Activated T-helper 1 cell treated with anti-CD3 and anti-CD28 coated beads, Interleukin-12 subunit alpha, Interleukin-12 subunit beta, Interleukin-2, Interleukin-4 antibody, amounts not matched to agents 30 ng/mL and 10 ng/mL and 1 ng/mL, durations not matched to agents 14 hours and 24 hours and 36 hours (primary cell): ENCODE measurements at regions of chr4 and their contacts with region 1.

Region 1: GRCh38 chr4:77862478-77863216 is at the start of gene MRPL1:
- DNase-seq: peak; percentile 84
- H3K4me3 Mint-ChIP-seq: peak within 1 kb of the TSS; percentile 90
- H3K27ac Mint-ChIP-seq: peak within 1 kb of the TSS; percentile 94
- H3K4me1 Mint-ChIP-seq: peaks cover 48% of the 10 kb centered on the region
- H3K27me3 Mint-ChIP-seq: no peaks in the 10 kb centered on the region
- total RNA-seq, gene MRPL1: 72.7 and 75.0 TPM in 2 replicates

Region 2: DNA sequence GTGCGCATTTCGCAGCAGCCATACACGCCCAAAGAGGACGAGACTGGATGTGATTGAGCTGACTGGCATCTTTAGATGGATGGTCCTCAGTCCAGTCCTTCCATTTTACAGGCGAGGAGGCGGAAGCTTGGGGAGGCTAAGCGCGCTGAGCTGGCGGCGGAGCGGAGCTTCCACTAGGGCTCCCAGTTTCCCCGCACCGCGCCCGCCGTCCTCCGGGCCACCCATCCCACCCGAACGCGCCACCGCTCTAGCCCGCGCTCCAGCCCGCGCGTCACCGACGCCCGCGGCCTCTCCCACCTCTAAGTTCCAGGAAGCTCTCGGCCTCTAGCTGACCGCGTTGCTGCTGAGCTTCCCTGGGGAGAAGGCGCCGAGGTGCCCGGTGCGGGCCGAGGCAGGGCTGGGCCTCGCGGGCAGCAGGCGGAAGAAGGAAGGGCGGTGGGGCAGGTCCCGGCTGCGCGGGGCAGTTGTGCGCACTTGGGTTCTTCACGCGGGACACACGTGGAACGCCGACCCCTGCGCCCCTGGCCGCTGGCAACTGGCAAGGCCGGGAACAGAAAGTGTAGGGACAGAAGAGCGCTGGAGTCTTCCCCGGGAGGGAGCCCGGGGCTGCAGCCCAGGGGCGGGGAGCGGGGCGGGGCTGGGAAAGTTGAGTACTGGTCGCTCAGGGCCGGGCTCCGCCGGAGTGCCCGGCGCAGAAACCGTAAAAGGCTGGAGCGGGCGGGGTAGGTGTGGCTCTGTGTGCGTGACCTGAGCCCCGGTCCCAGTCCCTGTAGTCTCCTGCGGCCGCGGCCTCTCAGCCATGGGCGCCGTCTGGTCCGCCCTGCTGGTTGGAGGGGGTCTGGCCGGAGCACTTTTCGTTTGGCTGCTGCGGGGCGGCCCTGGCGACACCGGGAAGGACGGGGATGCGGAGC is 1556.4 kb before region 1 on chr4 and contains the start of gene STBD1:
- intact Hi-C with region 1: loop called (anchors 10 kb)
- DNase-seq: peak; percentile 24
- H3K4me3 Mint-ChIP-seq: peak within 1 kb of the TSS; percentile 68
- H3K27ac Mint-ChIP-seq: peak within 1 kb of the TSS; percentile 24
- H3K4me1 Mint-ChIP-seq: peaks cover 48% of the 10 kb centered on the region
- H3K27me3 Mint-ChIP-seq: peaks cover 16% of the 10 kb centered on the region
- total RNA-seq, gene STBD1: 0.51 and 0.57 TPM in 2 replicates

Region 3: GRCh38 chr4:77028246-77028645 is 834.4 kb before region 1 on chr4:
- intact Hi-C with region 1: loop called (anchors 2 kb)
- DNase-seq: no peak
- H3K4me3 Mint-ChIP-seq: peak overlapping the region; percentile 35
- H3K27ac Mint-ChIP-seq: peak overlapping the region; percentile 71
- H3K4me1 Mint-ChIP-seq: peaks cover 51% of the 10 kb centered on the region
- H3K27me3 Mint-ChIP-seq: peaks cover 4% of the 10 kb centered on the region

Region 4: GRCh38 chr4:77593993-77594392 is 268.7 kb before region 1 on chr4:
- intact Hi-C with region 1: loop called (anchors 2 kb)
- DNase-seq: no peak
- H3K4me3 Mint-ChIP-seq: peak overlapping the region; percentile 15
- H3K27ac Mint-ChIP-seq: peak overlapping the region; percentile 82
- H3K4me1 Mint-ChIP-seq: peaks cover 53% of the 10 kb centered on the region
- H3K27me3 Mint-ChIP-seq: peaks cover 1% of the 10 kb centered on the region

Region 5: GRCh38 chr4:77734928-77735327 is 127.7 kb before region 1 on chr4:
- intact Hi-C with region 1: loop called (anchors 1 kb)
- DNase-seq: peak; percentile 50
- H3K4me3 Mint-ChIP-seq: peak overlapping the region; percentile 67
- H3K27ac Mint-ChIP-seq: peak overlapping the region; percentile 49
- H3K4me1 Mint-ChIP-seq: peaks cover 79% of the 10 kb centered on the region
- H3K27me3 Mint-ChIP-seq: no peaks in the 10 kb centered on the region

Region 6: GRCh38 chr4:77843628-77844027 is 19.0 kb before region 1 on chr4:
- intact Hi-C with region 1: loop called (anchors 1 kb)
- DNase-seq: no peak
- H3K4me3 Mint-ChIP-seq: peak overlapping the region; percentile 23
- H3K27ac Mint-ChIP-seq: peak overlapping the region; percentile 78
- H3K4me1 Mint-ChIP-seq: peaks cover 26% of the 10 kb centered on the region
- H3K27me3 Mint-ChIP-seq: no peaks in the 10 kb centered on the region

Region 7: DNA sequence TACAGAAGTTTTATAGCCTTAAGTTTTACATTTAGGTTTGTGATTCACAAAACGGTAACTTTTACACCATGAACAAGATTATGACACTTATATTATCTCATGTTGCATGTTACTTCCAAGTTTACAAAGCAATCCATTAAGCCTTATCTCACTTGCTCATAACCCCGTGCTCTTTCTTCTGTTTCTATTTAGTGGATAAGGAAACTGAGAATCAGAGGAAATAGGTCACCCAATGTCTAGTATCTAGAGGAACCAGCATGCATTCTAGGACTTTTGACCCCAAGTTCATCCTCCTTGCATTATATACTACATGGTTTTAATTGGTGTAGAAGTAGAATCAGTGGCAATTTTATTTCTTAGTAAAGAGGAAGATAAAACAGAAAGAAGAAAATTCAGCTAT is 621.9 kb after region 1 on chr4:
- intact Hi-C with region 1: no loop called
- DNase-seq: no peak
- H3K4me3 Mint-ChIP-seq: no peak overlapping the region
- H3K27ac Mint-ChIP-seq: no peak overlapping the region
- H3K4me1 Mint-ChIP-seq: no peaks in the 10 kb centered on the region
- H3K27me3 Mint-ChIP-seq: peaks cover 13% of the 10 kb centered on the region